ENCODE measurements at regions of chr5 and their contacts with region 1.

Region 1: GRCh38 chr5:91419571-91420537 is 36.7 kb upstream of the ARRDC3 start:
- DNase-seq: peak in 4 of 5 donors; percentile 36 to 57 (median 46)
- ATAC-seq: no peak
- H3K4me3 ChIP-seq: no peak overlapping the region
- H3K27ac ChIP-seq: no peak overlapping the region
- H3K4me1 ChIP-seq: no peaks in the 10 kb centered on the region
- H3K27me3 ChIP-seq: no peaks in the 10 kb centered on the region
- CTCF ChIP-seq: peak; percentile 69 to 95 (median 83)
- POLR2A ChIP-seq: no peak

Region 2: DNA sequence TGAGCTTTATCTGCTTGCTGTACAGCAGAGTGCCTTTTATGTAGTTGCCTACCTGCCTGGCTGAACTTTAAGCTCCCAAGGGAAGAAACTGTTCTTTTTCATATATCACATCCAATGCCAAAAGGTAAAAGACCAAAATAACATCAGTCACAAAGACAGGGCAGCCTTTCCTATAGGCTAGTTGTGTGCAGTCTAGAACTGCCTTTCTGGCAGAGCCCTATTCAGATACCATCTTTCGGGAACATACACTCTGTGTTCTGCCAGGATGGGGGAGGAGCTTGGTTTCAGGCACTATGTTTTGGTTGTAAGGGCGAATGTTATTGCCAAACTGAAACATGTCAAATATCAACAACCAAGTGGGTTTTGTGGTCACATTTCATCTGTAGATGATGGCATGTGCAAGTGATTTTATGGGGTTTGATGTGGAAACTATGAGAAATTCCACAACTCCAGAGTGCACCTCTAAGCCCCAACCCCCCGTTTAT is 546.8 kb before region 1 on chr5:
- intact Hi-C with region 1: loop called in 6 of 10 experiments (anchors 2 to 5 kb)
- DNase-seq: no peak
- ATAC-seq: peak in 3 of 4 donors; percentile 54 to 80 (median 74)
- H3K4me3 ChIP-seq: no peak overlapping the region
- H3K27ac ChIP-seq: no peak overlapping the region
- H3K4me1 ChIP-seq: peaks cover 0 to 20% (median 3%) of the 10 kb centered on the region in 12 donors
- H3K27me3 ChIP-seq: no peaks in the 10 kb centered on the region
- CTCF ChIP-seq: no peak
- POLR2A ChIP-seq: no peak

Region 3: DNA sequence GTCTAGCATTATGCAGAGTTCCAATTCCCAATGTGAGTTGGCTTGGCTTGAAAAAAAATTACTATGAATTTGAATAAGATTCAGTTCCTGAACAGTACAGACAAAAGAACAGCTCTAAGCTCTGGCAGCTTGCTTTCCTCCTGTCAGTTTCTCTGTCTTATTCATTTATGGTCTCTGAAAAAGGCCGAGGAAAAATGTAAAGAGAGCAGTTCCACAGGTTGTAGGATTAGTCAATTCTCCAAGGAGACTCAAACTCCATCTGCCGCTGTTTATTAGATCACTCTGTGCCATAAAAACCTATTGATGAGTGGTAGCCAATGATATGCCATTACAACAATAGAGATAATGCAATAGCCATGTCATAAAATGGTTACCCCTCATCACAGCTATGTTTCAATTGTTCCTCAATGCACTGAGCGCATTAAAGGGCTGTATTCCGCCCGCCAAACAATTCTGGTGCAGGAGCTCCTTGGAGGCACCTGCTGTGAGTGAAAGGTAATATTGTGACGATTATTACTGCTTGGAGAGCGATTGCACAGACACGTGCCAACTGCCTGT is 225.0 kb before region 1 on chr5:
- intact Hi-C with region 1: no loop called
- DNase-seq: no peak
- ATAC-seq: no peak
- H3K4me3 ChIP-seq: no peak overlapping the region
- H3K27ac ChIP-seq: no peak overlapping the region
- H3K4me1 ChIP-seq: peaks cover 0 to 10% (median 0%) of the 10 kb centered on the region in 12 donors
- H3K27me3 ChIP-seq: no peaks in the 10 kb centered on the region
- CTCF ChIP-seq: no peak
- POLR2A ChIP-seq: no peak

Region 4: DNA sequence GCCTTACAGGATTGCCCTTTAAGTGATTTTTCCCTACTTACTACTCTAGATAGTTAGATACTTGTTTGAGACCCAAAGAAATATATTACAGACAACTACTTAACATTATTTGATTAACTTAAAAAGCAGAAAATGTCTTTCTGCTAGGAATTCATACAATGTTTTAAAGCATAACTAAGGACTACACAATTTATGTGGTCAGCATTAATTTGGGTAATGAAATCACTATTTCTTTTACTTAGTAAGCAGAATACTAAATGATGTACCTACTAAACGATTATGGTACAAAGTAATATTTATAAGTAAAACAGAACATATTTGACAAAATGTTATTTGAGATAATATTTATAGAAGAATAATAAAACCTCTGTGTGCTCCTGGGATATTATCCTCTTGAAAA is 335.1 kb after region 1 on chr5:
- intact Hi-C with region 1: no loop called
- DNase-seq: no peak
- ATAC-seq: no peak
- H3K4me3 ChIP-seq: no peak overlapping the region
- H3K27ac ChIP-seq: no peak overlapping the region
- H3K4me1 ChIP-seq: no peaks in the 10 kb centered on the region
- H3K27me3 ChIP-seq: no peaks in the 10 kb centered on the region
- CTCF ChIP-seq: no peak
- POLR2A ChIP-seq: no peak

Measured in heart left ventricle (tissue), 16 donors.